CD14-positive monocyte (primary cell): ENCODE measurements at regions of chr14 and their contacts with region 1.

Region 1: GRCh38 chr14:20343092-20343861 is at the start of gene PARP2:
- DNase-seq: peak; percentile 97 to 99 (median 98)
- H3K4me3 ChIP-seq: peak within 1 kb of the TSS; percentile 71 to 89 (median 80)
- H3K4me3 Mint-ChIP-seq: peak within 1 kb of the TSS; percentile 95 to 96
- H3K27ac ChIP-seq: peak within 1 kb of the TSS; percentile 83 to 93
- H3K27ac Mint-ChIP-seq: peak within 1 kb of the TSS; percentile 93 to 98 (median 96)
- H3K4me1 ChIP-seq: peaks cover 11 to 14% of the 10 kb centered on the region in 2 donors
- H3K4me1 Mint-ChIP-seq: peaks cover 9% of the 10 kb centered on the region
- H3K27me3 ChIP-seq: no peaks in the 10 kb centered on the region
- H3K27me3 Mint-ChIP-seq: peaks cover 0 to 6% (median 3%) of the 10 kb centered on the region in 3 donors
- CTCF ChIP-seq: no peak
- polyA plus RNA-seq, gene PARP2: 1.8 to 7.3 (median 3.9) TPM

Region 2: DNA sequence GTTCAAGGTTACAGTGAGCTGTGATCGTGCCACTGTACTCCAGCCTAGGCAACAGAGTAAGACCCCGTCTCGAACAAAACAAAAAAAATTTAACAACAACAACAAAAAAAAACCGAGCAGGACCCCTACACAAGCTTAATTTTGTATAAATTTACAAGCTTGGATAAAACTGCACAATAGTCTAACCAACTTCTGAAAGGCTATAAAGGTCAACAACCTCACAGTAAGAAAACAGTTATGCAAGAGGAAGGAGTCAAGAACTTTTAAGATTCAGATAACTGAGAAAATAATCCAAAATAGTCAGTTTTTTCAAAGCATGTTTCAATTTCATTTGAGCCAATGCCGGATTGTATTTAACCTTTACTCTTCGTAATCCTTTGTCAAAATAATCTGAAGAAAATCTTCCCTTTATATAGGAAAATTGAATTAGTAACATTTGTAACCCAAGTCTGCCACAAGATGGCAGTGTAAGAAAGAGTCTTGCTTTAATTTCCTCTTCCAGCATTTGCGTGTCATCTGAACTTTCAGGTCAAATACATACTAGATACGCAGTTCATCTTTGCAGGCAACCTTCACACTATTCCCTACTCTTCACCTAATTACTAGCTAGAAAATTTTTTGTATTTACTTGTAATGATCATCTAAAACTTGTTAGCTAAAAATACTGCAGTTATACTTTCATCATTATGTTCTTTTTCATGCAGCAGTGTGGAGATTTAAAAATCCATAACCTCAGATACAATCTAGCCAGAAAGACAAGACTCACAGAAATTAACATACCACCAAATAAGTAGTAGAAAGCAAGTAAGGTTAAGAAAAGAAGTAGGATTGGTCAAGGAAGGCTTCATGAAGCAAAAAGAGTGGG is 16.0 kb before region 1 on chr14:
- intact Hi-C with region 1: loop called in 1 of 2 experiments (anchors 2 kb)
- DNase-seq: peak; percentile 50 to 79 (median 61)
- H3K4me3 ChIP-seq: no peak overlapping the region
- H3K4me3 Mint-ChIP-seq: no peak overlapping the region
- H3K27ac ChIP-seq: no peak overlapping the region
- H3K27ac Mint-ChIP-seq: peak overlapping the region in 1 of 7 donors; percentile 13
- H3K4me1 ChIP-seq: peaks cover 0 to under 1% of the 10 kb centered on the region in 2 donors
- H3K4me1 Mint-ChIP-seq: peaks cover 15% of the 10 kb centered on the region
- H3K27me3 ChIP-seq: no peaks in the 10 kb centered on the region
- H3K27me3 Mint-ChIP-seq: no peaks in the 10 kb centered on the region
- CTCF ChIP-seq: peak; percentile 81